ENCODE measurements at regions of chr6 and their contacts with region 1.

Region 1: GRCh38 chr6:3124667-3125066 is 6.2 kb downstream of the BPHL start:
- DNase-seq: no peak
- H3K27ac ChIP-seq: no peak overlapping the region
- CTCF ChIP-seq: no peak

Region 2: DNA sequence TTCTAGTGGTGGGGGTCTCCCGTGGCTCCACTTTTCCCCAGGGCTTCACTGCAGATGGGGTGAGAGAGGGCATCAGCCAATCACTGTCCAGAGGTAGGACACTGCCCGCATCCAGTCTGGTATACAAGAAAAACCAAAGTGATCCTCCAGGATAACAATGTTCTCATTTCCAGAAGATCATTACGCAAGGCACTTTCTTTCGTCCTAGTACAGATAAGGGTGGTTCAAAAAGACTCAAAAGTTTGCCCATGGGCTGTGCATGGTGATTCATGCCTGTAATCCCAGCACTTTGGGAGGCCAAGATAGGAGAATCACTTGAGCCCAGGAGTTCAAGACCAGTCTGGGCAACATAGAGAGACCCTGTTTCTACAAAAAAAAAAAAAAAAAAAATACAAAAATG is 895.6 kb before region 1 on chr6:
- CTCF ChIA-PET with region 1: interaction called, 10 read pairs
- POLR2A ChIA-PET with region 1: no interaction called
- DNase-seq: no peak
- H3K27ac ChIP-seq: no peak overlapping the region
- CTCF ChIP-seq: no peak

Region 3: DNA sequence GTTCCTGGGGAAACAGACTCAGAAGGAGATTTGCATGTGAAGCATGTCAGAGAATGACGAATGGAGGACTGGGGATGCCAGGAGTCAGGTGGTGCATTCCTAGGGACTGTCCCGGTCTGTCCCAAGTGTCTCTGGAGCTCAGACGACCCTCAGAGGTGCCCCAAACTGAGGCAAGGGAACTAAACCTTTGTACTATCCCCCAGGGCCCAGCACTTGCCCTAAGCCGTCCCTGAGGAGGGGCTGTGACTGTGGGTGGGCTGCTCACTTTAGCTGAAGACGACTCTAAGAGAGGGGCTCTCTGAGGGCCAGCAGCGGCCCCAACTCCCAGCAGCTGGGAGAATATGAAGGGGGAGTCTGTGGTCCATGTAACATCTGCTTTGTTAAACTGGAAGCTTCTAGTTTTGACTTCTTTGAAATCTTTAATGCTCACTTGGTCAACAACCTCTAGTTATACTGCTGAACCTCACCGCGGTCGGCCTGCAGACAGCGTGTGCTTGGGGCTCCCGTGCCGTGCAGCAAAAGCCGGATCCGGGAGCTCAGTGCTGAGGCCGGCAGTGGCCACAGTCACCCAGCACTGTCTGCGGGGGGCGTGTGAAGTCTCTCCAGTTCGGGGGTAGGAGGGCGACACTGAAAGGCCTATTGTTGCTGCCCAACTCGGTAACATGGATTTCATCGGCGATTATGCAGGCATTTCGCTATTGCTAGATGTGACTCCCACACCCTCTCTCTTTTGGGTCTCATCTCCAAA is 68.6 kb after region 1 on chr6:
- CTCF ChIA-PET with region 1: no interaction called
- POLR2A ChIA-PET with region 1: interaction called, 10 read pairs
- DNase-seq: no peak
- H3K27ac ChIP-seq: no peak overlapping the region
- CTCF ChIP-seq: no peak

Region 4: DNA sequence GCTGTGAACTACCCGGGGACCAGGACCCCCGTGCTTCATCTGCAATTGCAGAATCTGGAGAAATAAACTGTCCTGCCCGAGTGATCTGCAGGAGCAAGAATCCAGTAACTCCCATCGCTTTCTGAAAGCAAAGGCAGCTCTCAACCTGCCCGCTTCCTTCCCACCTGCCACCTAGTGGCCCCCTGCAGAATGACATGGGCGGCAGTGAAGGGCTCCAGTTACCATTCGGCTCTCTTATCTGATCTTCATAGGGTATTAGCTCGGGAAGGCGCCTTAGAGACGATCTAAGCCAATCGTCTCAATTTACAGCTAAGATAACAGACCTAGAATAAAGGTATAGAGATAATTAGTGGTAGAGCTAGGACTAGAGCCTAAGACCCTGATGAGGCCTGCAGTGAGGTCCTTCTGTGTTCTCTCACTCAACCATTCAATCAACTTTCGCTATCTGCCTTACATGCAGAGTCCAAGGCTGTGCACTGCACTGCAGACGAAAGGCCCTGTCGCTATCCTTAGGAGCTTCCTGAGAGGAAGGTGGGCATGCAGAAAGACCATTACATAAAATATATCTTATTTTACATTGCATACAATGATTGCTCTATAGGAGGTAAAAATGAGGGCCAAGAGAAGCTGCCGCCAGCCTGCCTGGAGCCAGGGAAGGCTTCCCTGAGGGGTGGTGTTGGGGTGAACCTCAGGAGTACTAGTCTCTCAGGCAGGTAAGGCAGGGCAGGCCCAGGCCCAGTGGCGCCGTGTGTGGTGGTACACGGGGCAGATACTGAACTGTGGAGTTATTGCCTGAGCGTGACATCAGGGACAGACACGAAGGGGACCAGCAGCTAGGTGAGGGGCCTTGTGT is 127.0 kb after region 1 on chr6:
- CTCF ChIA-PET with region 1: interaction called, 13 read pairs
- POLR2A ChIA-PET with region 1: no interaction called
- DNase-seq: peak; percentile 76
- H3K27ac ChIP-seq: no peak overlapping the region
- CTCF ChIP-seq: peak; percentile 94

Region 5: GRCh38 chr6:3414327-3415075 is 289.8 kb after region 1 on chr6:
- CTCF ChIA-PET with region 1: no interaction called
- POLR2A ChIA-PET with region 1: no interaction called
- DNase-seq: peak; percentile 79
- H3K27ac ChIP-seq: peak overlapping the region; percentile 36
- CTCF ChIP-seq: no peak